ENCODE measurements at regions of chr20 and their contacts with region 1.

Region 1: DNA sequence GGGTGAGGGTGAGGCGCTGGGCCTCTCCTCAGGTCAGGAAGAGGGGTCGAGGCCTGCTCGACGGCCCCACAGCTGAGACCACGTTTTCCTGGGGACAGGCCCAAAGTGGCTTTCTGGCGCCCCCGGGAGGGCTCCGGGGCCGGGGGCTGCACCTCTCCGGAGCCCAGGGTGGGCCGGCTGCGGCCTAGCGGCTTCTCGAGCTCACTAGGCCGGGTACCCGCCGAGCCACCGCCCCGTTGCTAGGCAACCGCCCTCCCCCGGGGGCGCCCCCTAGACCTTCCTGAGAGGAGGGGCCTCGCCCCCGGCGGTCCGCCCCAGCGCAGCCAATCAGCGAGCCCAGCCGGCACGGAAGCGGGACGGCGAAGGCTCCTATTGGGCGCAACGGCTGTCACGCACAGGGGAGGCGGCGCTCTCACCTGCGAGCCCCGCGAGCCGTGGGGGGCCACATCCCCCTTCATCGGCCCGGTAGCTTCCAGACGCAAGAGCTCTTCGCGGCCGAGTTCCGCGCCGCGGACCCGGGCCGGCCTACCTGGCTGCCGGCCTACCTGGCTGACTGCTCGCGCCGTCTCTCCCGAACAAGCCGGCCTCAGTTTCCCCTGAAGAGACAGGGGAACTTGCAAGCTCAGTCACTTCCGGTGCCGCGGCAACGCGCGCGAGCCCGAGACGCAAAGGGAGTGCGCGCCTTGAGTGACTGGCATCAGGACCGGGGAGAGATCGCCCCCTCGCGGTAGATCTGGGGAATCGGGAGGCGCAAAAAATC is 831 bp upstream of the BCL2L1 start:
- DNase-seq: peak; percentile 83
- ATAC-seq: peak; percentile 92
- H3K4me3 ChIP-seq: peak overlapping the region; percentile 77
- H3K27ac ChIP-seq: peak overlapping the region; percentile 93
- H3K4me1 ChIP-seq: peaks cover 15% of the 10 kb centered on the region
- H3K27me3 ChIP-seq: no peaks in the 10 kb centered on the region
- CTCF ChIP-seq: peak; percentile 91 to 99 (median 97)
- EP300 ChIP-seq: no peak
- POLR2A ChIP-seq: peak; percentile 73
- RAD21 ChIP-seq: peak; percentile 93

Region 2: GRCh38 chr20:31560094-31560899 is 163.2 kb before region 1 on chr20:
- CTCF ChIA-PET with region 1: interaction called, 19 read pairs
- POLR2A ChIA-PET with region 1: no interaction called
- RAD21 ChIA-PET with region 1: interaction called, 4 read pairs
- SMC1A ChIA-PET with region 1: no interaction called
- in situ Hi-C with region 1: no loop called
- intact Hi-C with region 1: loop called (anchors 5 kb)
- DNase-seq: no peak
- ATAC-seq: peak; percentile 83
- H3K4me3 ChIP-seq: no peak overlapping the region
- H3K27ac ChIP-seq: peak overlapping the region; percentile 15; the same call in 1 of the 2 replicates
- H3K4me1 ChIP-seq: no peaks in the 10 kb centered on the region
- H3K27me3 ChIP-seq: no peaks in the 10 kb centered on the region
- CTCF ChIP-seq: peak; percentile 76 to 94 (median 83)
- EP300 ChIP-seq: no peak
- POLR2A ChIP-seq: 0 out of 2 replicates have a peak, but pooled peaks have one; percentile 20
- RAD21 ChIP-seq: peak; percentile 43

Region 3: DNA sequence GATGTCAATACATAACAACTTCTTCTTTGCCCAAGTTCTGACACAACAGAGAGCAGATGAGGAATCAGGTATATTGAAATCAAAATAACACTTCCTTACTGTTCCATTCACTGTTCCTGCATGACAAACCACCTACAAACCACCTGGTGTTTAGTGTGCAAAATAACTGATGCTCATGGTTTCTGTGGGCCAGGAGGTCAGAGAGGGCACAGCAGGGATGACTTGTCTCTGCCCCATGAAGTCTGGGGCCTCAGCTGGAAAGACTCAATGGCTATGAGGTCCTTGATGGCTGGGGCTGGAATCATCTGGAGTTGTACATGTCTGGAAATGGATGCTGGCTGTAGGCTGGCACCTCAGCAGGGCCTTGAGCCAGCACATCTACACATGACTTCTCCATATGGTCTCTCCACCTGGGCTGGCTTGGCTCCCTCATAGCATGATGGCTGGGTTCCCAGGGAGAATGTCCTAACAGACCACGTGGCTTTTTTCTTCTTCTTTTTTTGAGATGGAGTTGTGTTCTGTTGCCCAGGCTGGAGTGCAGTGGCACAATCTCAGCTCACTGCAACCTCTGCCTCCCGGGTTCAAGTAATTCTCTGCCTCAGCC is 93.2 kb before region 1 on chr20:
- CTCF ChIA-PET with region 1: interaction called, 85 read pairs
- POLR2A ChIA-PET with region 1: interaction called, 13 read pairs
- RAD21 ChIA-PET with region 1: interaction called, 40 read pairs
- SMC1A ChIA-PET with region 1: interaction called, 34 read pairs
- in situ Hi-C with region 1: no loop called
- intact Hi-C with region 1: loop called (anchors 1 kb)
- DNase-seq: no peak
- ATAC-seq: peak; percentile 64
- H3K4me3 ChIP-seq: no peak overlapping the region
- H3K27ac ChIP-seq: no peak overlapping the region
- H3K4me1 ChIP-seq: no peaks in the 10 kb centered on the region
- H3K27me3 ChIP-seq: no peaks in the 10 kb centered on the region
- CTCF ChIP-seq: no peak
- EP300 ChIP-seq: no peak
- POLR2A ChIP-seq: no peak
- RAD21 ChIP-seq: no peak

Region 4: DNA sequence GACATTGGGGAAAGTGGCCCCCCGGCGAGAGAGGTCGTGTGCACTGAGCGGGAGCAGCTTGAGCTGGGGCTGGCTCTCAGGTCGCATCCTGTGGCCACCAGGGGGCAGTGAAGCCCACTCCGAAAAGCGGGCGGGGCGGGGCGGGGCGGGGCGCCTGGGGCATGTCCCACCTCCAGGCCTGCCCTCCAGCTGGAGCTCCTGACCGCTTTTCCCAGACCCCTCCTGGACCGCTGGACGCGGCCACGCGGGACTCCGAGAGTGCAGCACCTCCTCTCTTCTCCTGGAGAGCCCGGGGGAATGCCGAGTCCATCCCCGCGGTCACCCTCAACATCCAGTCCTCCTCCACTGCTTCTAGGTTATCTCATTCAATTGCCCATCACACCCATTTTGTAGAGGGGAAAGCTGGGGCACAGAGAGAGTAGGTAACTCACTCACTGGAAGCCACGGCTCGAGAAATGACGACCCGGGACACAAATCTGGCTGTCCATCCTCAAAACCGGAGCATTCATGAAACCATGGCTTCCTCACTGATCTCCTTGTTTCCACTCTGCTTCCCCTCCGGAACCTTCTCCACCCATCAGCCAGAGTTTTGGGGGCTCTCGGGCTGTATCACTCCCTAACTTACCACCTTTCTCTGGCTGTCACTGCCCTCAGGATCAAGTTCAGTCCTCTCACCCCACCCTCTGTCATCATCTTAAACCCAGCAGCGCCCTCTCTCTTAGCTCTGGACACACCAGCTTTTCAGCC is 61.7 kb before region 1 on chr20:
- CTCF ChIA-PET with region 1: interaction called, 531 read pairs
- POLR2A ChIA-PET with region 1: interaction called, 72 read pairs
- RAD21 ChIA-PET with region 1: interaction called, 428 read pairs
- SMC1A ChIA-PET with region 1: interaction called, 321 read pairs
- in situ Hi-C with region 1: loop called (anchors 5 kb)
- intact Hi-C with region 1: loop called (anchors 1 kb)
- DNase-seq: no peak
- ATAC-seq: peak; percentile 96
- H3K4me3 ChIP-seq: peak overlapping the region; percentile 65; the same call in 1 of the 2 replicates
- H3K27ac ChIP-seq: peak overlapping the region; percentile 42; the same call in 1 of the 2 replicates
- H3K4me1 ChIP-seq: peaks cover 3% of the 10 kb centered on the region; the same call in 1 of the 2 replicates
- H3K27me3 ChIP-seq: no peaks in the 10 kb centered on the region
- CTCF ChIP-seq: peak; percentile 61 to 82 (median 76)
- EP300 ChIP-seq: no peak
- POLR2A ChIP-seq: no peak
- RAD21 ChIP-seq: peak; percentile 77

Region 5: GRCh38 chr20:31684153-31685015 is 39.1 kb before region 1 on chr20:
- CTCF ChIA-PET with region 1: interaction called, 254 read pairs
- POLR2A ChIA-PET with region 1: interaction called, 36 read pairs
- RAD21 ChIA-PET with region 1: interaction called, 63 read pairs
- SMC1A ChIA-PET with region 1: interaction called, 146 read pairs
- in situ Hi-C with region 1: no loop called
- intact Hi-C with region 1: loop called (anchors 2 kb)
- DNase-seq: no peak
- ATAC-seq: peak; percentile 82
- H3K4me3 ChIP-seq: peak overlapping the region; percentile 44; the same call in 1 of the 2 replicates
- H3K27ac ChIP-seq: peak overlapping the region; percentile 35
- H3K4me1 ChIP-seq: peaks cover 26% of the 10 kb centered on the region
- H3K27me3 ChIP-seq: no peaks in the 10 kb centered on the region
- CTCF ChIP-seq: no peak
- EP300 ChIP-seq: no peak
- POLR2A ChIP-seq: no peak
- RAD21 ChIP-seq: no peak

Region 6: GRCh38 chr20:31704225-31705119 is 19.0 kb before region 1 on chr20:
- CTCF ChIA-PET with region 1: interaction called, 254 read pairs
- POLR2A ChIA-PET with region 1: interaction called, 34 read pairs
- RAD21 ChIA-PET with region 1: interaction called, 52 read pairs
- SMC1A ChIA-PET with region 1: interaction called, 56 read pairs
- in situ Hi-C with region 1: no loop called
- intact Hi-C with region 1: no loop called
- DNase-seq: no peak
- ATAC-seq: no peak
- H3K4me3 ChIP-seq: no peak overlapping the region
- H3K27ac ChIP-seq: no peak overlapping the region
- H3K4me1 ChIP-seq: peaks cover 37% of the 10 kb centered on the region
- H3K27me3 ChIP-seq: no peaks in the 10 kb centered on the region
- CTCF ChIP-seq: no peak
- EP300 ChIP-seq: no peak
- POLR2A ChIP-seq: no peak
- RAD21 ChIP-seq: no peak

Region 7: DNA sequence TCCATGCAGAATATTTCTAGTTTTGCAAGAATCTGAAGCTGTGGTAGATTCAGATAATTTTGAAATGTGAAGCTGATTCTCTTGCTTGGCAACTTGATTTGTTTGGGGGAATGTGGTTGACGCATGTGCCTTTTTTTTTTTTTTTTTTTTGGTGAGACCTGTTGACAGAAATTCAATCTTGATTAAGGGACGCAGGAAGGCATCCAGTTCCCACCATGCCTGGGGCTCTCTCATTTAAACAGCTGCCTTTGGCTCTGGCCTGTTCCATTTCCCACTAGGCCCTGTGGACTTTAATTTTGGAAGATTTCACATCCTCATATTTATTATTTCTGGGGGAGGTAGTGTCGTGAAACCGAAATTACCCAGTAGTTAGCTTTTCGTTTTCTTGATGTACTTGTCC is 24.1 kb after region 1 on chr20:
- CTCF ChIA-PET with region 1: interaction called, 11 read pairs
- POLR2A ChIA-PET with region 1: interaction called, 3 read pairs
- RAD21 ChIA-PET with region 1: interaction called, 5 read pairs
- SMC1A ChIA-PET with region 1: interaction called, 7 read pairs
- in situ Hi-C with region 1: no loop called
- intact Hi-C with region 1: no loop called
- DNase-seq: no peak
- ATAC-seq: peak; percentile 42
- H3K4me3 ChIP-seq: peak overlapping the region; percentile 10; the same call in 1 of the 2 replicates
- H3K27ac ChIP-seq: peak overlapping the region; percentile 56
- H3K4me1 ChIP-seq: no peaks in the 10 kb centered on the region
- H3K27me3 ChIP-seq: no peaks in the 10 kb centered on the region
- CTCF ChIP-seq: no peak
- EP300 ChIP-seq: no peak
- POLR2A ChIP-seq: no peak
- RAD21 ChIP-seq: no peak